Dendritic cell treated with granulocyte-macrophage colony-stimulating factor and Interleukin-4, amounts not matched to agents 40 ng/mL and 50 ng/mL, for 4 days (primary cell): ENCODE measurements at regions of chr2 and their contacts with region 1.

Region 1: GRCh38 chr2:201007561-201007998 is 44.1 kb upstream of the ORC2 start:
- H3K4me3 Mint-ChIP-seq: no peak overlapping the region
- H3K27ac Mint-ChIP-seq: no peak overlapping the region
- H3K4me1 Mint-ChIP-seq: no peaks in the 10 kb centered on the region
- H3K27me3 Mint-ChIP-seq: no peaks in the 10 kb centered on the region

Region 2: DNA sequence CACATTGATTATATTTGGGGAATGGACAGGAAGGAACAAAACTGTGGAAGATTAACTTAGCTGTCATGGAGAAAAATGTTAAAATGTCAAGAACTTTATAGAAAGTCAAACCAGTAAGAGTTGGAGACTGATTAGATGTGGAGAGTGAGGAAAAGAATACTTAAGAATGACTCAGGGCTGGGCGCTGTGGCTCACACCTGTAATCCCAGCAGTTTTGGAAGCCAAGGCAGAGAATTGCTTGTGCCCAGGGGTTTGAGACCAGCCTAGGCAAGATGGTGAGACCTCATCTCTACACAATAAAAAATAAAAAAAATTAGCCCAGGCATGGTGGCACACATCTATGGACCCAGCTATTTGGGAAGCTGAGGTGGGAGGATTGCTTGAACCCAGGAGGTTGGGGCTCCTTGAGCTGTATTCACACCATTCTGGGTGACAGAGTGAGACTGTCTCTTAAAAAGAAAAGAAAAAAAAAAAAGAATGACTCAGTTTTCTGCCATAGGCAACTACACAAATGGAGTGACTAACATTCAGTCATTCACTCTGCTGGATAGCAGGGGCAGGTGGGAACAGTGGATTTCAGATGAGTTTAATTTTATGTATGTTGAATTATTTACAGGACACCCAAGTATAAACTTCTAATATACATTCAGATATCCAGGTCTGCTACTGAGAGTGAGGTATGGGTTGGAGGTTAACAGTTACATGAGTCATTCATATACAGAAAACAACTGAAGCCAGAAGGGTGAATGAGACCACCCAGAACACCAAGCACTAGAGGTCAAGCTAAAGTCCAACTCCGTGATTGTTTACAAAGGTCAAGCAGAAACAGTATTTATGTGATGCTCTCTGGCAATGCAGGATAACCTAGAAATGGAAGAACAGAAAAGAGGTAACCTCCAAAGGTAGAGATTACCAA is 78.0 kb before region 1 on chr2:
- intact Hi-C with region 1: loop called (anchors 10 kb)
- H3K4me3 Mint-ChIP-seq: no peak overlapping the region
- H3K27ac Mint-ChIP-seq: peak overlapping the region; percentile 19
- H3K4me1 Mint-ChIP-seq: peaks cover 10% of the 10 kb centered on the region
- H3K27me3 Mint-ChIP-seq: no peaks in the 10 kb centered on the region

Region 3: GRCh38 chr2:201064797-201065329 is 57.3 kb after region 1 on chr2:
- intact Hi-C with region 1: loop called (anchors 5 kb)
- H3K4me3 Mint-ChIP-seq: no peak overlapping the region
- H3K27ac Mint-ChIP-seq: no peak overlapping the region
- H3K4me1 Mint-ChIP-seq: peaks cover 41% of the 10 kb centered on the region
- H3K27me3 Mint-ChIP-seq: no peaks in the 10 kb centered on the region